Esophagus muscularis mucosa (tissue), 4 donors: ENCODE measurements at regions of chr1 and their contacts with region 1.

Region 1: GRCh38 chr1:231866392-231867331 is 240.1 kb downstream of the DISC1 start:
- DNase-seq: no peak
- H3K4me3 ChIP-seq: no peak overlapping the region
- H3K27ac ChIP-seq: peak overlapping the region in 1 of 4 donors; percentile 51
- H3K4me1 ChIP-seq: peaks cover 19 to 27% (median 26%) of the 10 kb centered on the region in 4 donors
- H3K27me3 ChIP-seq: no peaks in the 10 kb centered on the region
- CTCF ChIP-seq: peak; percentile 80 to 84 (median 81)
- EP300 ChIP-seq: no peak
- POLR2A ChIP-seq: no peak

Region 2: GRCh38 chr1:232435729-232436128 is 569.1 kb after region 1 on chr1:
- intact Hi-C with region 1: loop called (anchors 10 kb)
- DNase-seq: no peak
- H3K4me3 ChIP-seq: no peak overlapping the region
- H3K27ac ChIP-seq: peak overlapping the region in 1 of 4 donors; percentile 2
- H3K4me1 ChIP-seq: peaks cover 26 to 31% (median 27%) of the 10 kb centered on the region in 4 donors
- H3K27me3 ChIP-seq: no peaks in the 10 kb centered on the region
- CTCF ChIP-seq: no peak
- EP300 ChIP-seq: no peak
- POLR2A ChIP-seq: no peak

Region 3: GRCh38 chr1:233240829-233241682 is 1374.4 kb after region 1 on chr1:
- intact Hi-C with region 1: loop called (anchors 5 kb)
- DNase-seq: peak; percentile 91
- H3K4me3 ChIP-seq: peak overlapping the region in 1 of 4 donors; percentile 41
- H3K27ac ChIP-seq: no peak overlapping the region
- H3K4me1 ChIP-seq: peaks cover 0 to 9% (median 0%) of the 10 kb centered on the region in 4 donors
- H3K27me3 ChIP-seq: no peaks in the 10 kb centered on the region
- CTCF ChIP-seq: peak; percentile 67 to 81 (median 76)
- EP300 ChIP-seq: no peak
- POLR2A ChIP-seq: no peak